Activated naive CD8-positive, alpha-beta T cell treated with anti-CD3 and anti-CD28 coated beads, Interleukin-2, amount 10 ng/mL, durations not matched to agents 7 days and 5 days (primary cell): ENCODE measurements at regions of chr9 and their contacts with region 1.

Region 1: GRCh38 chr9:69759421-69760277 is at the start of gene PTAR1:
- DNase-seq: peak; percentile 97
- ATAC-seq: peak; percentile 80
- H3K4me3 Mint-ChIP-seq: peak within 1 kb of the TSS; percentile 96
- H3K27ac Mint-ChIP-seq: peak within 1 kb of the TSS; percentile 98
- H3K4me1 Mint-ChIP-seq: peaks cover 18% of the 10 kb centered on the region
- H3K27me3 Mint-ChIP-seq: no peaks in the 10 kb centered on the region
- total RNA-seq, gene PTAR1: 68.4 to 69.6 TPM

Region 2: DNA sequence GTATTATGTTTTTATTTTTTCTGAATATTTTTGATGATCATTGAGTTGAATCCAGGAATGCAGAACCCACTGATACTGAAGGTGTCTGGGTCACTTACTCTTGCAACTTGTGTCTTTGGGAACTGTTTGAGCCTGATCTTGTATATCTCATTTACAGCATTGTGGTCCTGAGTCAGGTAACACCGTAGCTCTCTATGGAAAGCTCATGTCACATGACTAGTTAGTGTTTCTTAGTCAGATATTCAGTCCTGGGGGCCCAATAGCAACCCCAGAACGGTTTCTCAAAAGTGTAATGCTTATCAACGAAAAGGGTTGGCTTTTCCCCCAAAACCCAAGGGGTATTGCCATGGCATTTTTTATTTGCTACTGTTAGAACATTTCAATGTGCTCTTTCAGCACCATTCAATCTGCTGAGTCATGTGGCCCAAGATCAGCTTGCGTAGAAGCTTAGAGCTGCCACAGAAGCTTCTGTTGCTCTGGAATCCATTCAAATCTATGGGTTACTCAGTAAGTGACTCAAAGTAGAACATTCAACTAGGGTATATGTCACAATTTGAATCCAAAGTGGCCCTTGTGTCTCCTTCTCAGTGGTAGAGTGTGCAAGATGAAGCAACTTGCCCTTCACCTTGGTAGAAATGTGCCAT is 12.2 kb after region 1 on chr9:
- POLR2A ChIA-PET with region 1: no interaction called
- DNase-seq: no peak
- ATAC-seq: no peak
- H3K4me3 Mint-ChIP-seq: no peak overlapping the region
- H3K27ac Mint-ChIP-seq: no peak overlapping the region
- H3K4me1 Mint-ChIP-seq: peaks cover 2% of the 10 kb centered on the region
- H3K27me3 Mint-ChIP-seq: peaks cover 4% of the 10 kb centered on the region

Region 3: DNA sequence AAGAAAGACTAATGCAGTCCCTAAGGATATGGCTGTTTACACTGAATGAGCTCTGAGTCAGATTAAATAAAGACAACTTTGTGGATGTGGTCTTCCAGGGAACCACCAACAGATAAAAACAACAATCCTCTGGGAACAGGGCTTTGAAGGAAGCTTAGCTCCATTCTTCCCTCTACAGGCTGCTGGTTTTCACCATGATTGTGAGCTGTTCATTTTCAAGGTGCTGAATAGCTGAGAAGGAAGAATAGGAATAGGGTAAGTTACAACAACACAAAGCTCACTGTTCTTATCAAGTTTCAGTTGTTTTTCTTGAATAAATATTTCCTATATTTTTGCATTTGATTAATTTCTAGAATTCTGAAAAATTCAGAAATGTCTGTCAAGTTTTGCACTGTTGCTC is 26.1 kb after region 1 on chr9:
- POLR2A ChIA-PET with region 1: no interaction called
- DNase-seq: no peak
- ATAC-seq: no peak
- H3K4me3 Mint-ChIP-seq: no peak overlapping the region
- H3K27ac Mint-ChIP-seq: no peak overlapping the region
- H3K4me1 Mint-ChIP-seq: no peaks in the 10 kb centered on the region
- H3K27me3 Mint-ChIP-seq: peaks cover 28% of the 10 kb centered on the region

Region 4: DNA sequence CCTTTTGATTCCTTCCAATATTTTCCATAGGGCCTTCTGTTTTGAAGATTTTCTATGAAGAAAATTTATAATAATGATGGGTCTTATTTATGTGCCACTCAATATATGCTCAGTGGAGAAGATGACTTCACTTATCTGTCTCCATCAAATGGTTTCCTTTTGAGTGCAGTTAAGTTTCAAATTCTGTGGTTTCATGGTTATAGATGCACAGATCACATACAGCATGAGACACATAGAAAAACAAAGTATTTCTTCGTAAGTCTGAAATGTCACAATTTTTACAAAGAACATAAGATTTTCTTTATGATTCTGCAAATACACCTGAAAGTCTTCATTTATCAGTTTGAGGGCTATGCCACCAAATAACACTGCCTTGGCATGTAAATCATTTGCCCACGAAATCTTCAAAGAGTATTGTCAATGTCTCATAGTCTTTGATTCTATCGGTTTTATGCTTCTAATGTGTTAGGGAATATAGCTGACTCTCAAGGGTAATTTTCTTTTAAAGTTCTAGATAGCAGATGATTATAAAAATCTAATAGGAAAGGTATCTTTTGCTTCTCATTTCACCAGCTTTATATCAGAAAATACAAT is 75.0 kb after region 1 on chr9:
- POLR2A ChIA-PET with region 1: interaction called, 11 read pairs
- DNase-seq: no peak
- ATAC-seq: peak; percentile 91
- H3K4me3 Mint-ChIP-seq: peak overlapping the region; percentile 74
- H3K27ac Mint-ChIP-seq: peak overlapping the region; percentile 92
- H3K4me1 Mint-ChIP-seq: peaks cover 44% of the 10 kb centered on the region
- H3K27me3 Mint-ChIP-seq: no peaks in the 10 kb centered on the region